ENCODE measurements at regions of chr11 and their contacts with region 1.

Region 1: GRCh38 chr11:59560702-59561469 is 49.5 kb downstream of the OR4D9 start:
- DNase-seq: peak; percentile 81
- H3K4me3 Mint-ChIP-seq: peak overlapping the region; percentile 83
- H3K27ac Mint-ChIP-seq: peak overlapping the region; percentile 88
- H3K4me1 Mint-ChIP-seq: peaks cover 49% of the 10 kb centered on the region
- H3K27me3 Mint-ChIP-seq: peaks cover 5% of the 10 kb centered on the region

Region 2: GRCh38 chr11:59550368-59550841 is 10.5 kb before region 1 on chr11:
- CTCF ChIA-PET with region 1: interaction called, 5 read pairs
- POLR2A ChIA-PET with region 1: interaction called, 27 read pairs
- DNase-seq: peak; percentile 85
- H3K4me3 Mint-ChIP-seq: peak overlapping the region; percentile 79
- H3K27ac Mint-ChIP-seq: peak overlapping the region; percentile 83
- H3K4me1 Mint-ChIP-seq: peaks cover 36% of the 10 kb centered on the region
- H3K27me3 Mint-ChIP-seq: peaks cover 5% of the 10 kb centered on the region

Region 3: DNA sequence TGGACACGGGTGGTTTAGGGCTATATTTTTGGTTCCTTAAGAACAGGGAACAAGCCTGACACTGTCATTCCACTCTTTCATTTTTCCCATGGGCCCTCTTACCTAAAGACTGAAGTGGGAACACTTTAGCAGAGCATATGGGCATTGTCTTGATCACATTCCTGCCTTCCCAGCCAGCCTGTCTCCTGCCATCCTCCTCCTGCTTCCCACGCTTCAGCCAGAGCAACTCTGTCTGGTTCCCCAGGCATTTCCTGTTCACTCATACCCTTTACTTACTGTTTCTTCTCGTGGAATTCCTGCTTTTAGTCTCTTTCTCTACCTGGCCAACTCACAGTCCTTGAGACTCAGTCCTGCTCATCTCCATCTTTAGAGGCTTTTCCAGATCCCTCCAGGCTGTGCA is 226.9 kb after region 1 on chr11:
- CTCF ChIA-PET with region 1: no interaction called
- POLR2A ChIA-PET with region 1: no interaction called
- DNase-seq: no peak
- H3K4me3 Mint-ChIP-seq: no peak overlapping the region
- H3K27ac Mint-ChIP-seq: no peak overlapping the region
- H3K4me1 Mint-ChIP-seq: peaks cover 54% of the 10 kb centered on the region
- H3K27me3 Mint-ChIP-seq: no peaks in the 10 kb centered on the region